Mammary epithelial cell (primary cell): ENCODE measurements at regions of chr20 and their contacts with region 1.

Region 1: GRCh38 chr20:33853507-33853813 is 42.3 kb downstream of the CHMP4B start:
- DNase-seq: no peak
- H3K4me3 ChIP-seq: no peak overlapping the region
- H3K27ac ChIP-seq: no peak overlapping the region
- H3K4me1 ChIP-seq: no peaks in the 10 kb centered on the region
- H3K27me3 ChIP-seq: no peaks in the 10 kb centered on the region
- CTCF ChIP-seq: no peak

Region 2: GRCh38 chr20:33889312-33889711 is 35.9 kb after region 1 on chr20:
- CTCF ChIA-PET with region 1: no interaction called
- dilution Hi-C with region 1: loop called (anchors 5 kb)
- in situ Hi-C with region 1: no loop called
- intact Hi-C with region 1: no loop called
- DNase-seq: no peak
- H3K4me3 ChIP-seq: no peak overlapping the region
- H3K27ac ChIP-seq: no peak overlapping the region
- H3K4me1 ChIP-seq: no peaks in the 10 kb centered on the region
- H3K27me3 ChIP-seq: no peaks in the 10 kb centered on the region
- CTCF ChIP-seq: no peak